A549 (cell line): ENCODE measurements at regions of chr16 and their contacts with region 1.

Region 1: DNA sequence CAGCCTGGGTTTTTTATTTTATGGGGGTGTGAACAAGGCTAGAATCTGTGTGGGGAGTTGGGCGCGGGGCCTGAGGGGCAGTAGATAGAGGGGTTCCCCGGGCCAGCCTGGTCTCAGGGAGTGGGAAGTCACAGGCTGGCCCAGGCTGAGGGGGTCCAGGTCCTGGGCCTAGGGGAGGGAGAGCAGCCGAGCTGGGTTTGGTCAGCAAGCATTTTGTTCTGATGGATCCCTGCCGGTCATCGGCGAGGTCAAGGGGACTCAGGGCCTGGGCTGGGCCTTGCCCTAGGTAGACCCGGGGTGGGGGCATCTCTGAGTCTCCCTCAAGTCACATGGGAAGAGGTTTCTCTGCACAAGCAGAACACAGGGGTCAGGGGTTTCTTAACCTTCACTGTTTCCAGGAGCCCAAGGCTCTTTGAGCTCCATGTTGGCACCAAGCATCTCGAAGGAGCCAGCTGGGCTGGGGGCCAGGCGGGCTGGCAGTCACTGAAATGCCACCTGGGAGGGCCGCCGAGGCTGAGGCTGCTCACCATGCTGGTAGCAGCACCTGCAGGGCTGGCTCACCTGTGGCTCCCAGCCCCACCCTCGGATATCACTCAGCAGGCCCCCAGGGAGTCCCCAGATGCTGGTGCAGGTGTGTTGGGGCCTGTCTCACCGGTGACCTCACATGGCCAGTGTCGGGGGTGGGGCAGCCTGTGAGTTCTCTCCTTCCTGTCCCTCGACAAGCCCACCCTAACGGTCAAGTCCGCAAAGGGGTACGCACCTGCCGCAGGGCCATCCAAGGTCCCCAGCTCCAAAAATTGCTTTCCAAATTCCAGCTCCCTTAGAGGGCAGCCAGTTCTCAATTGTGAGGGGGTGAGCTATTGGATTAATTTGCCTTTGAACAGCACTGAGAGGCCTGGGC is 41.0 kb downstream of the SLC7A5 start:
- DNase-seq: peak in 1 of 2 experiments; percentile 81
- ATAC-seq: 0 out of 6 replicates have a peak, but pooled peaks of 1 of the 2 experiments have one; percentile 0
- H3K4me3 ChIP-seq: no peak overlapping the region
- H3K27ac ChIP-seq: peak overlapping the region; percentile 97 to 99
- H3K4me1 ChIP-seq: peaks cover 98% of the 10 kb centered on the region
- CTCF ChIP-seq: no peak
- EP300 ChIP-seq: no peak
- POLR2A ChIP-seq: no peak
- RAD21 ChIP-seq: no peak

Region 2: GRCh38 chr16:87127061-87127739 is 701.1 kb before region 1 on chr16:
- CTCF ChIA-PET with region 1: no interaction called
- POLR2A ChIA-PET with region 1: no interaction called
- DNase-seq: no peak
- ATAC-seq: peak in 1 of 2 experiments; percentile 19; a peak in 2 of 6 replicates
- H3K4me3 ChIP-seq: no peak overlapping the region
- H3K27ac ChIP-seq: no peak overlapping the region
- H3K4me1 ChIP-seq: peaks cover 4% of the 10 kb centered on the region; the same call in 1 of the 3 replicates
- CTCF ChIP-seq: no peak
- EP300 ChIP-seq: no peak
- POLR2A ChIP-seq: no peak
- RAD21 ChIP-seq: no peak

Region 3: GRCh38 chr16:87806603-87807546 is 21.4 kb before region 1 on chr16:
- CTCF ChIA-PET with region 1: interaction called, 8 read pairs
- POLR2A ChIA-PET with region 1: interaction called, 11 read pairs
- DNase-seq: peak; percentile 78 to 85
- ATAC-seq: peak; percentile 78 to 83
- H3K4me3 ChIP-seq: peak overlapping the region; percentile 31
- H3K27ac ChIP-seq: peak overlapping the region; percentile 92 to 97
- H3K4me1 ChIP-seq: peaks cover 45% of the 10 kb centered on the region
- CTCF ChIP-seq: no peak
- EP300 ChIP-seq: peak; percentile 41 to 74; a peak in 2 of 5 replicates
- POLR2A ChIP-seq: peak; percentile 8; the same call in 1 of the 2 replicates
- RAD21 ChIP-seq: peak in 1 of 2 experiments; percentile 33; a peak in 1 of 5 replicates